KBM-7 (cell line): ENCODE measurements at regions of chr5 and their contacts with region 1.

Region 1: DNA sequence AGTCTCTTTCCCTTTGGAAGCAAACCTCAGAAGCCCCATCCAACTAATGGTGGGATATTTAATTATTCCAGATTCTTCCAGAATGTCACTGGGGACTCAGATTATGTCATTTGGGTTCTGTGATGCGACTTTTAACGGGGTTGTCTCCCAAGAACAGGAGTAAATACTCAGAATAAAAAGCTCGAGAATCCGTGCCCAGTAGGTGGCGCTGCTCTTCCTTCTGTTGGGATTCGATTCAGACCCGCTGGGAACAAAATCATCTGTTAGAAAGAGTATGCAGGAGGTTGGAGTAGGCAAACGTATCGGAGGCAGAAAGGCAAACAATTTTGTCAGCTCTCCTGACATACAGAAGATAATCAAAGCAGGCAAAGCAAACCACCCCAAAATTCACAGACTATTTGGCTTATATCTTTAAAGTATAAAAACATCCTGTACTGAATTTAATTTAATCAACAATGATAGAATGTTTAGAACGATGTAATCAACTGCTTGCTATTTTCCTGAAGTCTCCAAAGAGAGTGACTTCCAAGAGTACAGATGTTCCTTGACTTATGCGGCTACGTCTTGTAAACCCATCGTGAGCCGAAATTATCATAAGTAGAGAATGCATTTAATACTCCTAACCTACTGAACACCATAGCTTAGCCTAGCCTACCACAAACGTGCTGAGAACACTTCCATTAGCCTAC is 169.8 kb upstream of the RAI14 start:
- DNase-seq: peak; percentile 76

Region 2: GRCh38 chr5:33788922-33789321 is 697.4 kb before region 1 on chr5:
- in situ Hi-C with region 1: no loop called
- DNase-seq: no peak

Region 3: GRCh38 chr5:34898258-34898895 is 412.1 kb after region 1 on chr5:
- in situ Hi-C with region 1: loop called (anchors 25 kb)
- DNase-seq: peak; percentile 74

Region 4: GRCh38 chr5:35003018-35003957 is 517.0 kb after region 1 on chr5:
- in situ Hi-C with region 1: loop called (anchors 25 kb)
- DNase-seq: peak; percentile 80